Esophagus muscularis mucosa (tissue), 4 donors: ENCODE measurements at regions of chr1 and their contacts with region 1.

Region 1: GRCh38 chr1:110203021-110203661 is 7.0 kb upstream of the KCNC4 start:
- DNase-seq: no peak
- H3K4me3 ChIP-seq: no peak overlapping the region
- H3K27ac ChIP-seq: no peak overlapping the region
- H3K4me1 ChIP-seq: peaks cover 0 to 15% (median 4%) of the 10 kb centered on the region in 4 donors
- H3K27me3 ChIP-seq: no peaks in the 10 kb centered on the region
- CTCF ChIP-seq: peak; percentile 88 to 90 (median 88)
- EP300 ChIP-seq: no peak
- POLR2A ChIP-seq: no peak

Region 2: GRCh38 chr1:110243574-110243973 is 40.4 kb after region 1 on chr1:
- intact Hi-C with region 1: no loop called
- DNase-seq: no peak
- H3K4me3 ChIP-seq: no peak overlapping the region
- H3K27ac ChIP-seq: no peak overlapping the region
- H3K4me1 ChIP-seq: peaks cover 0 to 12% (median 2%) of the 10 kb centered on the region in 4 donors
- H3K27me3 ChIP-seq: no peaks in the 10 kb centered on the region
- CTCF ChIP-seq: no peak
- EP300 ChIP-seq: no peak
- POLR2A ChIP-seq: no peak

Region 3: GRCh38 chr1:110312188-110313121 is 109.3 kb after region 1 on chr1:
- intact Hi-C with region 1: loop called (anchors 1 kb)
- DNase-seq: no peak
- H3K4me3 ChIP-seq: no peak overlapping the region
- H3K27ac ChIP-seq: no peak overlapping the region
- H3K4me1 ChIP-seq: peaks cover 7 to 15% (median 10%) of the 10 kb centered on the region in 4 donors
- H3K27me3 ChIP-seq: no peaks in the 10 kb centered on the region
- CTCF ChIP-seq: peak; percentile 90 to 93 (median 90)
- EP300 ChIP-seq: no peak
- POLR2A ChIP-seq: no peak